Adrenal gland (tissue), 19 donors: ENCODE measurements at regions of chr1 and their contacts with region 1.

Region 1: DNA sequence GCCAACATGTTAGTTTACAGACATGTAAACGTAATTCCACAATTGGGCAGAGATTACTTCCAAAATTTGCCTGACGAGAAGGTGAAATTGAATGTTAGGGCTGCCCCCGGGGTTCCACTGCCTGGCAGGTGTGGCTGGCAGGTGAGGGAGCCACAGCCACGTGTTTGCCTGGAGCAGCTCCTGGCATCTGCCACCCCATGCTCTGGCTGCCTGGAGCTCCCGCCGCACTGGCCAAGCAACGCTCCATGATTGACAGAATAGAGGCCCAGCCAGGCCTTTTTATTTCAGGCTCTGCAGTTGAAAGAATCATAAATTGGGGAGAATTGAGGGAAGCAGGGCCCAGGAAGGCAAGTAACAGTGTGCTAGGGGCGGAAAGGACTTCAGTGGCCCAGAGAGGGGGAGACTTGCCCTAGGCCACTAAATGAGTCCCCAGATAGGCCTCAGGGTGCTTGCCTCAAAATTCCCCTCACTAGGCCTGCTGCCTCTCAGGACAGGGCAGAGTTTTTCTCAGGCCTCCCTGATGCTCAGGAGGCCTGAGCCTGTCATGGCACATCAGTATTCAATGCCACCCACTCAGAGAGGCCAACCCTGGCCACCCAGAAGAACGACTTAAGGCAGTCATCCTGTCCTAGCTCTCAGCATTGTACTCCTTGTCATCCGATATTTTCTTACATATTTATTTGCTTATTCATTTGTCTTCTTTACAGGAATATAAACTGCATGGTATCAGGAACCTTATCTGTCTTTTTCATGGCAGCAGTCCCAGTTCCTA is 16.7 kb upstream of the S1PR1 start:
- DNase-seq: no peak
- H3K4me3 ChIP-seq: no peak overlapping the region
- H3K27ac ChIP-seq: no peak overlapping the region
- H3K4me1 ChIP-seq: no peaks in the 10 kb centered on the region
- H3K27me3 ChIP-seq: no peaks in the 10 kb centered on the region
- CTCF ChIP-seq: no peak
- POLR2A ChIP-seq: no peak

Region 2: GRCh38 chr1:101150670-101151069 is 69.4 kb before region 1 on chr1:
- intact Hi-C with region 1: loop called in 1 of 2 experiments (anchors 10 kb)
- DNase-seq: no peak
- H3K4me3 ChIP-seq: no peak overlapping the region
- H3K27ac ChIP-seq: no peak overlapping the region
- H3K4me1 ChIP-seq: no peaks in the 10 kb centered on the region
- H3K27me3 ChIP-seq: no peaks in the 10 kb centered on the region
- CTCF ChIP-seq: no peak
- POLR2A ChIP-seq: no peak

Region 3: GRCh38 chr1:101165954-101166353 is 54.2 kb before region 1 on chr1:
- intact Hi-C with region 1: no loop called
- DNase-seq: no peak
- H3K4me3 ChIP-seq: no peak overlapping the region
- H3K27ac ChIP-seq: no peak overlapping the region
- H3K4me1 ChIP-seq: no peaks in the 10 kb centered on the region
- H3K27me3 ChIP-seq: no peaks in the 10 kb centered on the region
- CTCF ChIP-seq: no peak
- POLR2A ChIP-seq: no peak